SK-N-SH (cell line): ENCODE measurements at regions of chr20 and their contacts with region 1.

Region 1: GRCh38 chr20:50980851-50981713 is 22.5 kb downstream of the MOCS3 start:
- DNase-seq: peak; percentile 83
- H3K4me3 ChIP-seq: no peak overlapping the region; a peak in 1 of 4 replicates
- H3K27ac ChIP-seq: peak overlapping the region in 1 of 2 experiments; percentile 91; a peak in 2 of 4 replicates
- H3K4me1 ChIP-seq: peaks cover 4 to 12% of the 10 kb centered on the region in 2 experiments; a peak in 1 of 4 replicates
- H3K27me3 ChIP-seq: no peaks in the 10 kb centered on the region
- CTCF ChIP-seq: peak; percentile 93
- EP300 ChIP-seq: no peak
- RAD21 ChIP-seq: peak; percentile 77

Region 2: GRCh38 chr20:50958615-50959542 is 22.2 kb before region 1 on chr20 and contains the start of gene MOCS3:
- CTCF ChIA-PET with region 1: interaction called, 10 read pairs
- POLR2A ChIA-PET with region 1: no interaction called
- DNase-seq: peak; percentile 86
- H3K4me3 ChIP-seq: peak within 1 kb of the TSS; percentile 98 to 100
- H3K27ac ChIP-seq: peak within 1 kb of the TSS; percentile 91 to 96
- H3K4me1 ChIP-seq: peaks cover 18 to 22% of the 10 kb centered on the region in 2 experiments
- H3K27me3 ChIP-seq: no peaks in the 10 kb centered on the region
- CTCF ChIP-seq: no peak
- EP300 ChIP-seq: 0 out of 4 replicates have a peak, but pooled peaks of 1 of the 2 experiments have one; percentile 32
- RAD21 ChIP-seq: no peak
- polyA plus RNA-seq, gene MOCS3: 4.0 and 4.4 TPM in 2 replicates

Region 3: DNA sequence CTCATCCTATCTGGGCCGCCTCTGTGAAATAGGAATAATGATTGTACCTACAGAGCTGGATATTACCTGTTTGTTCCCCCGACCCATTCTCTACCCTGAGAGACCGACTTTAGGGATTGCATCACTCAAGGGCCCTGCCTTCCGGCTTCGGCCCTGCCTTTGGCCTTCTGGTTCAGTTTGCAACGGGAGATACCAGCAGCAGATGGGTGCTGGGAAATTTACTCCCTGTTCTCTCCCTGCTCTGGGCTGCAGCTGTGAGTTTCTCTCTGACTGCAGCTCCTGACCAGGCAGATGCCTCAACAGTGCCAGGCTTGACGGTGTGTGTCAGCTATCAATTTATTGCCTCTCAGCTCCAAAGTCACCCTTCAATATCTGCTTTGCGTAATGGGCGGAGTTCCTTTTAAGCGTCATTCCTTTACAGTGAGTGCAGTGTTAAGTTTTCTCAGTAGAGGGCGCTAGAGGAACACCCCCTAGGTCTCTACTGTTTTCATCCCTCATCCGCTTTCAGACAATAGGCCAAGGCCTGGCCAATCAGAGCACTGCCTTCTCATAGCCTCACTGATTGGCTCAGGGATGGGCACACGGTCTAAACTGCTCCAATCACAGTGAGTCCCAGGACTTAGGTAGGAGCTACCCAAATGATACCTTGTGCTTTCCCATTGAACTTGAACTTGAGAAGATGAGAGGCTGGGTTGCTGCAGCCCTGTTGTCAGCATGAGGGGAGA is 11.8 kb after region 1 on chr20:
- CTCF ChIA-PET with region 1: interaction called, 29 read pairs
- POLR2A ChIA-PET with region 1: no interaction called
- DNase-seq: peak; percentile 83
- H3K4me3 ChIP-seq: no peak overlapping the region; a peak in 1 of 4 replicates
- H3K27ac ChIP-seq: no peak overlapping the region
- H3K4me1 ChIP-seq: no peaks in the 10 kb centered on the region
- H3K27me3 ChIP-seq: no peaks in the 10 kb centered on the region
- CTCF ChIP-seq: peak; percentile 67
- EP300 ChIP-seq: no peak
- RAD21 ChIP-seq: peak; percentile 79

Region 4: GRCh38 chr20:51004248-51004727 is 23.2 kb after region 1 on chr20:
- CTCF ChIA-PET with region 1: no interaction called
- POLR2A ChIA-PET with region 1: no interaction called
- DNase-seq: no peak
- H3K4me3 ChIP-seq: no peak overlapping the region
- H3K27ac ChIP-seq: no peak overlapping the region
- H3K4me1 ChIP-seq: no peaks in the 10 kb centered on the region
- H3K27me3 ChIP-seq: no peaks in the 10 kb centered on the region
- CTCF ChIP-seq: no peak
- EP300 ChIP-seq: no peak
- RAD21 ChIP-seq: no peak

Region 5: DNA sequence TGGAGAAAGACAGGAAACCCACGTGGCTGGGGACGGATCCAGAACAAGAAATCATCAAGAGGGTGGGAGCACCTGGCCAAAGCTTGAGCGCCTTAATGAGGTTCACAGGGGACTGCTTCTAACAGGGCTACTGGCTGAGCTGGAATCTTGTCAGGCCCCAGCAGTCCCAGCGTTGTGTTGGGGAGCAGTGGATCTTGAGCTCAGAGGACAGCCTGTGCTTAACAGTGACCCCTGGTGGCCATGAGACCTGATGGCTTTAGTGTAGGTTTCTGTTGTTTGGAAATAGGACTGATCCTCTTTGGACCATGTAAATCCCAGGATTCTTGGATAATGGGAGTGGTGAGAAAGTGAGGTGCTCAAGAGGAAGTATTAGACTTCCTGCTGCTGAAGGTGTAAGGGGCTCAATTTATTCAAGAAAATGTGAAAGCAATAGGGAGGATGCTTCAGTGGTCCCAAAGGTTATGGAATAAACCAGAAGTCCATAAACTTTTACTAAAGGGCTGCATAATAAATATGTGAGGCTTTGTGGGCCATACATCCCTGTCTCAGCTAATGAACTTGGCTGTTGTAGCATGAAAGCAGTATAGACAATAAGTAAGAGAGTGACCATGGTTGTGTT is 345.2 kb after region 1 on chr20:
- CTCF ChIA-PET with region 1: interaction called, 163 read pairs
- POLR2A ChIA-PET with region 1: no interaction called
- DNase-seq: peak; percentile 52
- H3K4me3 ChIP-seq: no peak overlapping the region
- H3K27ac ChIP-seq: peak overlapping the region in 1 of 2 experiments; percentile 98; a peak in 2 of 4 replicates
- H3K4me1 ChIP-seq: 0 out of 4 replicates have a peak, but pooled peaks cover 0 to 3% of the 10 kb centered on the region in 2 experiments
- H3K27me3 ChIP-seq: no peaks in the 10 kb centered on the region
- CTCF ChIP-seq: peak; percentile 52
- EP300 ChIP-seq: no peak
- RAD21 ChIP-seq: peak; percentile 51

Region 6: GRCh38 chr20:51354769-51355319 is 373.8 kb after region 1 on chr20:
- CTCF ChIA-PET with region 1: interaction called, 15 read pairs
- POLR2A ChIA-PET with region 1: no interaction called
- DNase-seq: no peak
- H3K4me3 ChIP-seq: no peak overlapping the region
- H3K27ac ChIP-seq: peak overlapping the region in 1 of 2 experiments; percentile 87; a peak in 2 of 4 replicates
- H3K4me1 ChIP-seq: peaks cover 0 to 22% of the 10 kb centered on the region in 2 experiments; a peak in 2 of 4 replicates
- H3K27me3 ChIP-seq: no peaks in the 10 kb centered on the region
- CTCF ChIP-seq: no peak
- EP300 ChIP-seq: no peak
- RAD21 ChIP-seq: no peak

Region 7: DNA sequence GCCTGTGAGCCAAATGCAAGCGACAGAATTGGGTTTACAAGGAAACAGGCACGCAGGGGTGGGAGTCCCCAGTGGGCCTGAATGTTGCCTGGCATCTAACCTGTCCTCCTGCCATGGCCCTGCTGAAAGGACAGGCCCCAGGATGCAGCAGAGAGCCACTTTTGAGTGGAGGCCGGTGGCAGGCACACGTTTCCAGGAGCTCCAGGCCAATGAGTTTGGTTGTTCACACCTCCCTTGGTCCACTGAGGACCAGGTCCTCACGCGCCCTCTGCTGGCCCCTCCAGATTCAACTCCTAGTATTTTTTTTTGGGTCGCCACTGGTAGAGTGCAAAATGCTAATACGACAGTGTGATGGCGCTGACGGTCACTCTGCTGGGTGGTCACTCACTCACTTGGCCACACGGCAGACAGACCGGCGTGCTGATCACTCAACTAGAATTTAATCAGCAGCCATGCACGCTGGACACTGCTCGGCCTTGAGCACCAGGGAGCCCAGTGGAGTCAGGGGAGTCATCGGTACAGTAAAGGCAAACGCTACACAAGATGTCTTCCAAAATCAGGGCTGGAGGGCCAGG is 643.2 kb after region 1 on chr20:
- CTCF ChIA-PET with region 1: interaction called, 18 read pairs
- POLR2A ChIA-PET with region 1: no interaction called
- DNase-seq: peak; percentile 77
- H3K4me3 ChIP-seq: no peak overlapping the region
- H3K27ac ChIP-seq: no peak overlapping the region
- H3K4me1 ChIP-seq: 0 out of 4 replicates have a peak, but pooled peaks cover 0 to 4% of the 10 kb centered on the region in 2 experiments
- H3K27me3 ChIP-seq: no peaks in the 10 kb centered on the region
- CTCF ChIP-seq: peak; percentile 73
- EP300 ChIP-seq: no peak
- RAD21 ChIP-seq: peak; percentile 65